ENCODE measurements at regions of chr14 and their contacts with region 1.

Region 1: DNA sequence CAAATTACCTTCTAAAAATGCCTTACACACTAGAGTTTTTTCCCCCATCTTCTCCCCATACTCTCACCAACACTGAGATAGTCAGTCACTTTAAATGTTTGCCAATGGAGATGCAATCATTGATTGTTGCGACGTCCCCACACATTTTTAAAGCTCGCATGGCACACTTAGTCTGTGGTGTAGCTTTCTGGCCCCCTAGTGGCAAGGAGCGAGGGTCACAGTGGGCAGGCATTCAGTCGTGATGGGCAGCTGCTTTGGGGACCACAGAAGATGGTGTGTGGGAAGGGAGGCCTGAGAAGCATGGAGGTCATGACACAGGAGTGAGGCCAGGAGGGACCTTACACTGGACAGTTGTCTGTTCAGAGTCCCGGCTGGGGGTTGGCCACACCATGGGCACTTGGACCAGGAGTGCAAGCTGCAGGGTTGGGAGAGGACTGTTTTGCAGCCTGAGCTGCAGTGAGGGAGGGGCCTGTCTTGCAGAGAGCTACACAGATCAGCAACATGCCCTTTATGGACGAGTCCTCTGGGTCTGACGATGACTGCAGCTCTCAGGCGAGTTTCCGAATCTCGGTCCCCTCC is 28.7 kb downstream of the PIGH start:
- DNase-seq: peak; percentile 54
- H3K4me3 Mint-ChIP-seq: no peak overlapping the region
- H3K27ac Mint-ChIP-seq: no peak overlapping the region
- H3K4me1 Mint-ChIP-seq: peaks cover 8% of the 10 kb centered on the region
- H3K27me3 Mint-ChIP-seq: peaks cover 5% of the 10 kb centered on the region

Region 2: DNA sequence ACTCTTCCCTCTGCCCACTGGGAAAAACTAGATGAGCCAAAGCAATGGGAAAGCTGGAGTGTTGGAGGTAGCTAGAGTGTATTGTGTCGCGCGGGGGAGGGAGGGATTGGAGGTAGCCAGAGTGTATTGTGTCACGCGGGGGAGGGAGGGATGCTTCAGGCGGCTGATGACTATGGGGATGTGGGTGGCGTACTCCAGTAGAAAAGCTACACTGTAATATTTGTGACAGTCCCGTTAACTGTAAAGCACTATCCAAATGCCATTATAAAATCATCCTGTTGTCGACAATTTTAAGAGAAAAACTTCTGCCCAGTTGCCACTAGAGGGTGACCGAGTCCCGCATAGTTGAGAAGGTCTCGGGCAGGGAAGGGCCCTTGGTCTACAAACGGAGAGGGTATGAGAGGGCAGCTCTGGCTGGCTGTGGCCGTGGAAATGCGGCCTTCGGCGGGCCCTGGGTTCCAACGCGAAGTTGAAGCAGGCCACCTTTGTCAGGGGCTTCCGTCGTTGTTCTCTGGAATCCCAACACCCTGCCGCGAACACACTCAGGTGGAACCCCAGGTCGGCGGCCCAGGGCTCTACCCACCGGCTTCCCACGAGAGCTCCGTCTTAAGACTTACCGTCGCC is 144.3 kb before region 1 on chr14:
- intact Hi-C with region 1: loop called (anchors 1 kb)
- DNase-seq: peak; percentile 61
- H3K4me3 Mint-ChIP-seq: no peak overlapping the region
- H3K27ac Mint-ChIP-seq: no peak overlapping the region
- H3K4me1 Mint-ChIP-seq: peaks cover 7% of the 10 kb centered on the region
- H3K27me3 Mint-ChIP-seq: peaks cover 27% of the 10 kb centered on the region

Region 3: GRCh38 chr14:67446120-67447032 is 125.0 kb before region 1 on chr14:
- intact Hi-C with region 1: no loop called
- DNase-seq: no peak
- H3K4me3 Mint-ChIP-seq: no peak overlapping the region
- H3K27ac Mint-ChIP-seq: no peak overlapping the region
- H3K4me1 Mint-ChIP-seq: no peaks in the 10 kb centered on the region
- H3K27me3 Mint-ChIP-seq: peaks cover 20% of the 10 kb centered on the region

Region 4: DNA sequence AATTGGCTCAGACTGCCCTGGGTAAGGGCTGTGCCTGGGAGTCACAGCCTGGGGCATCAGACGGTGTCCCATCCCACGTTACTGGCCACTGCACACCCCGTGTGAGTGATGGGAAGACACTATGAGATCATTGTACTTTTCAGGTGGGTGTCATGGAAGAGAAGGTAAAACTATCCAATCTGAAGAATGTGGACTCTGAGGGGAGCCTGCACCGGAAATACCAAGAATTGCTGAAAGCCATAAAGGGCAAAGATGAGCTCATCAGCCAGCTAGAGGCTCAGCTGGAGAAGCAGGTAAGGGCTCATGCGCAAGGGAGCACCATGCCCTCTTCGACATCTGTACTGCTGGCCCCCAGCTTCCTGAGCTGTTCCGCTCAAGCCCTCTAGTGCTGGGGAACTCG is 14.2 kb before region 1 on chr14:
- intact Hi-C with region 1: no loop called
- DNase-seq: no peak
- H3K4me3 Mint-ChIP-seq: no peak overlapping the region
- H3K27ac Mint-ChIP-seq: no peak overlapping the region
- H3K4me1 Mint-ChIP-seq: no peaks in the 10 kb centered on the region
- H3K27me3 Mint-ChIP-seq: peaks cover 8% of the 10 kb centered on the region